ENCODE measurements at regions of chr10 and their contacts with region 1.

Region 1: GRCh38 chr10:86899670-86900276 is 57.6 kb downstream of the MMRN2 start:
- DNase-seq: peak in 41 of 42 donors; percentile 35 to 89 (median 73)

Region 2: GRCh38 chr10:86688398-86688921 is 211.3 kb before region 1 on chr10:
- intact Hi-C with region 1: loop called (anchors 5 kb)
- DNase-seq: peak; percentile 43 to 89 (median 72)

Region 3: DNA sequence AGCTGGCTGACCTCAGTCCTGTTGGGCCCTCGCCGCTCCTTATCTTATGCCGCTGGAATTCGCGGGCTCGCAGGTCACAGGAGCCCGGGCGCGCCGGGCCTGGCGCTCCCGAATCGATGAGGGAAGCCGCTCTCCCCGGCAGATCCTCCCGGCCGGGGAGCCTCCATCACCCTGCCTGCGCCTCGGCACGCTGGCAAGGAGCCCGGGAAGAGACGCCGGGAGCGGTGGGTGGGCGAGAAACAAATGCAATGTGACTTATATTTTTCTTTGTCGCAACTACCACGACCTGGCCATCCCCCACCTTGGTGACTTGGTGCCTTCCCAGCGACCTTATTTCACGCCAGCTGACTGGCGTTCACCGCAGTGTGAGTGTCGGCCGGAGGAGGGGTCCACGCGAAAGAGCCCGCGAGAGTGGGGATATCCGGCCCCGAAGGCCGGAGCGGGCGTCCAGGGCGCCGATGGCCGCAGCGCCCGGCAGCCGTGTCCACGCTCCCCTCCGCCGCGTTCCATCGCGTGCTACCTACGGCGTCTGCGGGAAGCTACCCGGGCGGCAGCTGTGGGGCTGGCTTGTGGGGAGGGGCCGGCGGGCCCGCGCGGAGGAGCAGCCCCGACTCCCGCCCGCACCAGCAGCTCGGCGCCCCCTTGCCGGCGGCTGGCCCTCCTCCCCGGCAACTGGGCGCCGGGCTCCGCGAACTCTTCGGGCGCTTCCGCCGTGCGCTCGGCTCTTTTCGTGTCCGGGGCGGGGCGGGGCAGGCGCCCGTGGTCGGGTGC is 143.8 kb before region 1 on chr10:
- intact Hi-C with region 1: loop called (anchors 5 kb)
- DNase-seq: peak; percentile 51 to 97 (median 92)

Measured in head of caudate nucleus (tissue), 42 donors.